Transverse colon (tissue), 4 donors: ENCODE measurements at regions of chr9 and their contacts with region 1.

Region 1: GRCh38 chr9:111860443-111860842 is 36.2 kb upstream of the UGCG start:
- DNase-seq: no peak
- H3K4me3 ChIP-seq: no peak overlapping the region
- H3K27ac ChIP-seq: no peak overlapping the region
- H3K4me1 ChIP-seq: no peaks in the 10 kb centered on the region
- H3K27me3 ChIP-seq: no peaks in the 10 kb centered on the region
- CTCF ChIP-seq: no peak
- EP300 ChIP-seq: no peak
- POLR2A ChIP-seq: no peak

Region 2: GRCh38 chr9:112050544-112051475 is 190.4 kb after region 1 on chr9:
- in situ Hi-C with region 1: no loop called
- intact Hi-C with region 1: no loop called
- DNase-seq: peak; percentile 59
- H3K4me3 ChIP-seq: no peak overlapping the region
- H3K27ac ChIP-seq: peak overlapping the region; percentile 77 to 79 (median 78)
- H3K4me1 ChIP-seq: peaks cover 11 to 36% (median 27%) of the 10 kb centered on the region in 4 donors
- H3K27me3 ChIP-seq: no peaks in the 10 kb centered on the region
- CTCF ChIP-seq: no peak
- EP300 ChIP-seq: no peak
- POLR2A ChIP-seq: no peak

Region 3: GRCh38 chr9:113125386-113126035 is 1265.1 kb after region 1 on chr9:
- in situ Hi-C with region 1: no loop called
- intact Hi-C with region 1: loop called (anchors 5 kb)
- DNase-seq: no peak
- H3K4me3 ChIP-seq: no peak overlapping the region
- H3K27ac ChIP-seq: no peak overlapping the region
- H3K4me1 ChIP-seq: no peaks in the 10 kb centered on the region
- H3K27me3 ChIP-seq: peaks cover 27% of the 10 kb centered on the region
- CTCF ChIP-seq: no peak
- EP300 ChIP-seq: no peak
- POLR2A ChIP-seq: no peak